ENCODE measurements at regions of chr10 and their contacts with region 1.

Region 1: DNA sequence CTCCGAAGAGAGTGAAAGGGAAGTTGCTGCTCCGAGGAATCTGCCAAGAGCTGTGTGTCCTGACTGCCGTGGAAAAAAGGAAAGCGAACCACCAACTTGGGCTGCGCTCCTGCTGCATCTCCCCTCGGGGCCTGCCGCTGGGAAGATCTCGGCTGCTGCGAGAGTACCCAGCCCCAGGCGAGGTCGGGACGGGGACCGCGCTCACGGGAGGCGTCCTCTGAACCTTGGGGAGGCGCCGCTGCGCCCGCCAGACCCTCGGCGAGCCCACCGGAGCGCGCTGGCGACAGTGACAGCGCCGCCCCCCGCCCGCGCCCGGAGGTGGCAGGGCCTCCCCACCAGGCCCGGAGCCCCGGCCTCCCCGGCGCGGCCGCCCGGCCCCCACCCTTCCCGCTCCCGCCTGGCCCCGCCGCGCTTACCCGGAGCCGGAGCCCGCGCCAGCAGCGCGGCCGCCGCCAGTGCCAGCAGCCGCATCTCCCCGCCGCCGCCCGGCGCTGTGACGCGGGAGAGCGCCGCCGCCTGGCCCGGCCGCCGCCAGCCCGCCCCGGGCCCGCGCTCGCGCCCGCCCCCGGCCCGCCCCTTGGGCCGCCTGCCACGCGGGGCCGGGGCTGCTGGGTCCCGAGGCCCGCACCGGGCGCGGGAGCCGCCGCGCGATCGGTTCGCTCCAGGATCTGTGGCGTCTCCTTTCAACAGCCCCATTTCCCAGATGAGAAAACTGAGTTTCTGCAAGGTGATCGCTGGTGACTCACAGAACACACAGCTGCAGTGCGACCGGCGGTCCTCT is at the start of gene VSTM4:
- DNase-seq: peak; percentile 41 to 68
- ATAC-seq: peak; percentile 22 to 73 (median 51)
- H3K4me3 ChIP-seq: peak within 1 kb of the TSS; percentile 11 to 79 (median 66)
- H3K27ac ChIP-seq: peak within 1 kb of the TSS in 9 of 10 donors; percentile 74 to 89 (median 87)
- H3K4me1 ChIP-seq: peaks cover 3 to 60% (median 45%) of the 10 kb centered on the region in 9 donors
- H3K27me3 ChIP-seq: peaks cover 0 to 12% (median 0%) of the 10 kb centered on the region in 7 donors
- CTCF ChIP-seq: peak in 4 of 9 donors; percentile 18 to 36 (median 23)
- total RNA-seq, gene VSTM4: 12.0 to 26.7 (median 18.1) TPM

Region 2: DNA sequence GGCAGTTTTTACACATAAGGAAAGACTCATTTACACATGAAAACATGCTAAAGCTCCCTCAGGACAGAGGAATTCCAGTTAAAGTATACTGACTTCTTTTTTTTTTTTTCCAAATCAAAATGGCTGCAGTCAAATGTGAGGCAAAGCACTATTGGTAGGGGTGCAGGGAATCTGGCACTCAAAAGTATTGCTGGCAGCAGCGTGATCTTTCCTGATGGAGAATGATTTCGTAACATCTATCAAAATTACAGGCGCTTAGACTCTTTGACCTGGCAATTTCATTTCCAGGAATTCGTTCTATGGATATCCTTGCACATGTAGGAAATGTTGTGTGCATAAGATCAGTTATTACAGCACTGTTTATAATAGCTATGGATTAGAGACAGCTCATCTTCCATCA is 65.5 kb before region 1 on chr10:
- intact Hi-C with region 1: no loop called
- DNase-seq: no peak
- ATAC-seq: no peak
- H3K4me3 ChIP-seq: no peak overlapping the region
- H3K27ac ChIP-seq: no peak overlapping the region
- H3K4me1 ChIP-seq: peaks cover 5 to 28% (median 19%) of the 10 kb centered on the region in 9 donors
- H3K27me3 ChIP-seq: no peaks in the 10 kb centered on the region
- CTCF ChIP-seq: no peak

Region 3: DNA sequence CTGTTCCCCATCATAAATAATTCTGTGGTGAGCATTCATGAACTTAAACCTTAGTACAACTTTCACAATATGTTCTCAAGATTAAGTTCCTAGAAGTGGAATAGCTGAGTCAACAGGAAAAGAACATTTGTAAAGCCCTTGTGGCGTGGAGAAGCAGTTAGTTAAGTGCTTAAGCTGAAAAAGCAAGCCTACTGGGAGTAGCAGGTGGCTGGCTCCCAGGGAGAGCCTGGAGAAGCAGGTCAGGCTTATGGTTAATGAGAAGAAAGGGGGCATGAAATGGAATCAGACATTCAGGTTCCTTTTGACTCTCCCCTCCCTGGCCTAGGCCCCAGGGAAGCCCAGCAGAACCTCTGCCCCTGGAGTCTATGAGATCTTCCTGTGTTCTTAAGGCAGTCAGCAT is 35.1 kb before region 1 on chr10:
- intact Hi-C with region 1: loop called in 1 of 10 experiments (anchors 2 kb)
- DNase-seq: no peak
- ATAC-seq: peak in 6 of 8 donors; percentile 21 to 64 (median 31)
- H3K4me3 ChIP-seq: no peak overlapping the region
- H3K27ac ChIP-seq: peak overlapping the region in 5 of 10 donors; percentile 22 to 78 (median 34)
- H3K4me1 ChIP-seq: peaks cover 14 to 78% (median 69%) of the 10 kb centered on the region in 9 donors
- H3K27me3 ChIP-seq: no peaks in the 10 kb centered on the region
- CTCF ChIP-seq: no peak

Region 4: DNA sequence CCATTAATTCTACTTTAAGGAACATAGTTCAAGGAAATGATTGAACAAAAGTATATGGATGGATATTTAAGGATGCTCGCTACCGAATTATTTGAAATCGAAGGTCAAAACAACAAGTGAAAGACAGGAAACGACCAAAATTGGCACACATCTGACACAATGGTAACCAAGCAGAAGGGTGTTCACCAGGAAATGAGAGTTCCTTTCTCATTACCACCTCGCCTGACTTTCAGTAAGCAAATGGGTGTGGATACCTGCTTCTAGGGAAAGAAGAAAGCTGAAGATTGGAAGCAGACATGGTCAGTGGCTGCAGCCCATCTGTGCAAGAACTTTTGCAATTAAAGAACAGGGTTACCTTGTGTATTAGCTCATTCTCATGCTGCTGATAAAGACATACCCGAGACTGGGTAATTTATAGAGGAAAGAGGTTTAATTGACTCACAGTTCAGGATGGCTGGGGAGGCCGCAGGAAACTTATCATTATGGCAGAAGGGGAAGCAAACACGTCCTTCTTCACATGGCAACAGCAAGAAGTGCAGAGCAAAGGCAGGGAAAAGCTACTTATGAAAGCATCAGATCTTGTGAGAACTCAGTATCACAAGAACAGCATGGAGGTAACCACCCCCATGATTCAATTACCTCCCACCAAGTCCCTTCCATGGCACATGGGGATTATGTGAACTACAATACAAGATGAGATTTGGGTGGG is 79.2 kb after region 1 on chr10:
- intact Hi-C with region 1: no loop called
- DNase-seq: no peak
- ATAC-seq: peak; percentile 40 to 72 (median 56)
- H3K4me3 ChIP-seq: no peak overlapping the region
- H3K27ac ChIP-seq: peak overlapping the region in 9 of 10 donors; percentile 0 to 82 (median 38)
- H3K4me1 ChIP-seq: peaks cover 0 to 36% (median 14%) of the 10 kb centered on the region in 9 donors
- H3K27me3 ChIP-seq: no peaks in the 10 kb centered on the region
- CTCF ChIP-seq: no peak